A673 (cell line): ENCODE measurements at regions of chr3 and their contacts with region 1.

Region 1: GRCh38 chr3:29764603-29765254 is 483.9 kb downstream of the RBMS3 start:
- DNase-seq: peak; percentile 92
- H3K4me3 ChIP-seq: no peak overlapping the region
- H3K27ac ChIP-seq: no peak overlapping the region
- H3K4me1 ChIP-seq: peaks cover 47% of the 10 kb centered on the region
- H3K27me3 ChIP-seq: no peaks in the 10 kb centered on the region
- CTCF ChIP-seq: peak; percentile 75

Region 2: GRCh38 chr3:28667646-28668621 is 1096.8 kb before region 1 on chr3:
- CTCF ChIA-PET with region 1: interaction called, 8 read pairs
- POLR2A ChIA-PET with region 1: no interaction called
- intact Hi-C with region 1: loop called (anchors 10 kb)
- DNase-seq: peak; percentile 78
- H3K4me3 ChIP-seq: no peak overlapping the region
- H3K27ac ChIP-seq: no peak overlapping the region
- H3K4me1 ChIP-seq: no peaks in the 10 kb centered on the region
- H3K27me3 ChIP-seq: no peaks in the 10 kb centered on the region
- CTCF ChIP-seq: peak; percentile 91

Region 3: GRCh38 chr3:28916713-28917499 is 847.8 kb before region 1 on chr3:
- CTCF ChIA-PET with region 1: interaction called, 8 read pairs
- POLR2A ChIA-PET with region 1: interaction called, 3 read pairs
- intact Hi-C with region 1: loop called (anchors 2 kb)
- DNase-seq: peak; percentile 85
- H3K4me3 ChIP-seq: peak overlapping the region; percentile 35
- H3K27ac ChIP-seq: peak overlapping the region; percentile 25
- H3K4me1 ChIP-seq: peaks cover 12% of the 10 kb centered on the region
- H3K27me3 ChIP-seq: no peaks in the 10 kb centered on the region
- CTCF ChIP-seq: peak; percentile 72

Region 4: GRCh38 chr3:29335438-29335837 is 429.3 kb before region 1 on chr3:
- CTCF ChIA-PET with region 1: no interaction called
- POLR2A ChIA-PET with region 1: no interaction called
- intact Hi-C with region 1: loop called (anchors 2 kb)
- DNase-seq: peak; percentile 99
- H3K4me3 ChIP-seq: peak overlapping the region; percentile 30
- H3K27ac ChIP-seq: peak overlapping the region; percentile 72
- H3K4me1 ChIP-seq: peaks cover 67% of the 10 kb centered on the region
- H3K27me3 ChIP-seq: no peaks in the 10 kb centered on the region
- CTCF ChIP-seq: no peak

Region 5: DNA sequence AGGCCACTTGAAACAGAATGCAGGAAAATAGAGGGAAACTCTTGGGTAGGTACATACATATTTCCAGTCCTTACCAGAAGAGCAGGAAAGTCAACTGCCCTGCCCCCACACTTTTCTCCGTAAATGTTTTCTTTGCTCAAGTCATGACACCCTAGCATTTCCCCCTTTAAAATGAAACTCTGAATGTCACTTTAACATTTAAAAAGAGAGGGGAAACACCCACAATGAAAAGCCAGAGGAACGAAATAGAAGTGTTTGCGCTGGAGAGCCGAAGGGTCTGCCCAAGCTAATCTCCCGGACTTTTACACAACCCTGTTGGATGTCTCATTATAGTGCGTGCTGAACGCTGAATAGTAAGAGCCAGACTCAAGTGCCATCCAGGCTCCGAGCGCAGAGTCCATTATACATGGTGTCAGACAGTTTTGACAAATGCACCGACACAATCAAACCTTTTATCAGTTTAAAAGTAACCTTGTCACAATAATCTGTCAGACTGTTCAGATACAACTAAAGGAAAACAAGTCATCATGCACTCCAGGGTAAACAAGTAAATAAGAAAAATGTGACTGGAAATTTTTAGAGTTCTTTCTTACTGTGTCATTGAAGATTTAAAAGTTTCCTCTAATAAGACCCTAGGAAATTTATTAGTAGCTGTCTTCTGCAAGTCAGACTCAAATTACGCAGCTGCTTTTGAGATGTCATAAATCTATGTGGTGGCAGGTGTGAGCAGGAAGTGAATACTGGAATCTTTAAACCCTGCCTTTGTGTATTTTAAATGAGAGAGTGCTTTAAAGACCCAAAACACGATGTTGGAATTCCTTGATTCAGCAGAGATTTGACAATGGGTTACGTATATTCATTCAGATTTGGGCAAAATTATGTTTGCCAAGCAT is 324.1 kb before region 1 on chr3:
- CTCF ChIA-PET with region 1: interaction called, 3 read pairs
- POLR2A ChIA-PET with region 1: no interaction called
- intact Hi-C with region 1: loop called (anchors 5 kb)
- DNase-seq: peak; percentile 87
- H3K4me3 ChIP-seq: peak overlapping the region; percentile 39
- H3K27ac ChIP-seq: peak overlapping the region; percentile 60
- H3K4me1 ChIP-seq: peaks cover 21% of the 10 kb centered on the region
- H3K27me3 ChIP-seq: no peaks in the 10 kb centered on the region
- CTCF ChIP-seq: no peak